ENCODE measurements at regions of chr7 and their contacts with region 1.

Region 1: GRCh38 chr7:27478084-27478483 is 184.6 kb downstream of the HIBADH start:
- DNase-seq: no peak
- H3K4me3 ChIP-seq: no peak overlapping the region
- H3K27ac ChIP-seq: no peak overlapping the region
- H3K4me1 ChIP-seq: no peaks in the 10 kb centered on the region
- H3K27me3 ChIP-seq: peaks cover 8% of the 10 kb centered on the region
- CTCF ChIP-seq: no peak

Region 2: DNA sequence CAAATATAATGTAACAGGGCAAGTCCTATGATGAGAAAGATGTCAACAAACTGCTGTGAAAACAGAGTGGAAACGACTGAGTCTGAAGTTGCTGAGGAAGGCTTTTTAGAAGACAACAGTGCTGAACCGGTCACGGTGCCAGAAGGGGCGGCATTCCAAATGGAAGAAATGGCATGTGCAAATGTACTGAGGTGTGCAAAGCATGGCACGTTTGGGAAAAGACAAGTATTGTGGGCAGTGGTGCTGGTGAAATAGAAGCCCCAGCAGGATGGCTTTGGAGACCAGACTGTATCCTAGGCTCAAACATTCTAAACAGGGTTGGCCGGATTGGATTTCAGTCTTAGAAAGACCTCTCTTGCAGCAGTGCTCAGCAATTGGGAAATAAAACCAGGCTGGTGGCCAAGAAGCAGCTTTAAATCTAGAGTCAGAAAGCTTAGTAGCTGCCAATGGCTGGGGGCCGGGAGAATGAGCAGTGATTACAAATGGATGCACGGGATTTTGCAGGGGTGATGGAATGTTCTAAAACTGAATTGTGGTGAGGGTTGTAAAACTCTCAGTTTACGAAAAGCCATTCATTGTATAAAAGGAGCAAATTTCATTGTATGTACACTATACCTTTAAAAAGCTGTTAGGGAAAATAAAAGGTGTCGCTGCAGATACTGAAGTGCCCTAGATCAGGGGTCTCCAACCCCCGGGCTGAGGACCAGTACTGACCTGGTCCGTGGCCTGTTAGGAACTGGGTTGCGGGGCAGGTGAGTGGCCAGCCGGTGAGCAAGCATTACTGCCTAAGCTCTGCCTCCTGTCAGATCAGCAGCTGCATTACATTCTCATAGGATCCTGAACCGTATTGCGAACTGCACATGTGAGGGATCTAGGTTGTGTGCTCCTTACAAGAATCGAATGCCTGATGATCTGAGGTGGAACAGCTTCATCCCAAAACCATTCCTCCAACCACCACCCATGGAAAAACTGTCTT is 43.0 kb after region 1 on chr7:
- CTCF ChIA-PET with region 1: no interaction called
- POLR2A ChIA-PET with region 1: interaction called, 10 read pairs
- intact Hi-C with region 1: no loop called
- DNase-seq: no peak
- H3K4me3 ChIP-seq: no peak overlapping the region
- H3K27ac ChIP-seq: no peak overlapping the region
- H3K4me1 ChIP-seq: no peaks in the 10 kb centered on the region
- H3K27me3 ChIP-seq: no peaks in the 10 kb centered on the region
- CTCF ChIP-seq: no peak